Left colon (tissue), 2 donors: ENCODE measurements at regions of chr5 and their contacts with region 1.

Region 1: DNA sequence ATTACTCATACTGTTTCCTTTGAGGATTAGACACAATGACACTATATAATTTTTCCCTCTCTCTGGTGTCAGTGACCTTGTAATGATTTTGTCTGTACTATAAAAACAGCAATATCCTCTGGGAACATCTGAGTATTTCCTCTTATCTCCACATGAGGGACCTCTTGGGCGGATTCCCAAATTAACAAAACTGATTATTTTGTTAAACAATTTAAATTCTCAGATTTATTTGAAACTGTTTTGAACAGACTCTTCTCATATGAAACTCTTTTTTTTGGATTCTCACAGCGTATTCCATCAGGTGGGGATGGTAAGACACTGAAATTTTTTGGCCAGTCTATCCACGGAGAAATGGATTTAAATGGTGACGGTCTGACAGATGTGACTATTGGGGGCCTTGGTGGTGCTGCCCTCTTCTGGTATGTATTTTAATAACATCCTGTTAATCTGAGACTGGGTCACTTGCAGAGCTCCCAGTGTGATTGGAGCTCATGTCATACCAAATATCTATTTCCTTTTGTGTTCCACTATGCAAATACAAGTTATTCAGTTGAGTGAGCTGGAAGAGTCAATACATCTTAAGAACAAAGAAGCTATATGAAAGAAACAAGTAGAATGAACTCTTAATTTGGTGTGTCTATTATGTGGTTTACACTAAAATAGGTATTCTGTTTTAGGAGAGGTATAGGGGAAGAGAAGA is 73.8 kb upstream of the ITGA2 start:
- DNase-seq: no peak
- ATAC-seq: peak; percentile 88

Region 2: DNA sequence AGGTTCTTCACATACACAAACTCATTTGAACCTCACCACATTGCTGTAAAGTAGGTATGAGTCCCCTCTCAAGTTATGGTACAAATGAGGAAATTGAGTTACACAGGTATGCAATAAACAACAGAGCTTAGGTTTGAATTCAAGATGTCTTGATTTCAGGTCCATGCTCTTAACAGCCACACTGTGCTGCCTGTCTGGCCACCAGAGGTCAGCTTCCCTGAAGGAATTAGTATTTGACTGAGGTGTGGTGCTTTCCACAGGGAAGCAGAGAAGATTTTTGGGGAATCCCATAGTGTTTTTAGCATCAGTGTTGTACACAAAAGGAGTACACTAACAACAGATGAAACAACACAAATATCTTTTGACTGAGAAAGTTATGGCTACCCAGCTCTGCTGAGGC is 222.0 kb before region 1 on chr5:
- intact Hi-C with region 1: loop called in 1 of 2 experiments (anchors 10 kb)
- DNase-seq: peak in 1 of 2 donors; percentile 48
- ATAC-seq: peak; percentile 71

Region 3: GRCh38 chr5:53035868-53036381 is 120.6 kb after region 1 on chr5:
- intact Hi-C with region 1: no loop called
- DNase-seq: no peak
- ATAC-seq: peak; percentile 31